Naive thymus-derived CD4-positive, alpha-beta T cell (primary cell): ENCODE measurements at regions of chr6 and their contacts with region 1.

Region 1: DNA sequence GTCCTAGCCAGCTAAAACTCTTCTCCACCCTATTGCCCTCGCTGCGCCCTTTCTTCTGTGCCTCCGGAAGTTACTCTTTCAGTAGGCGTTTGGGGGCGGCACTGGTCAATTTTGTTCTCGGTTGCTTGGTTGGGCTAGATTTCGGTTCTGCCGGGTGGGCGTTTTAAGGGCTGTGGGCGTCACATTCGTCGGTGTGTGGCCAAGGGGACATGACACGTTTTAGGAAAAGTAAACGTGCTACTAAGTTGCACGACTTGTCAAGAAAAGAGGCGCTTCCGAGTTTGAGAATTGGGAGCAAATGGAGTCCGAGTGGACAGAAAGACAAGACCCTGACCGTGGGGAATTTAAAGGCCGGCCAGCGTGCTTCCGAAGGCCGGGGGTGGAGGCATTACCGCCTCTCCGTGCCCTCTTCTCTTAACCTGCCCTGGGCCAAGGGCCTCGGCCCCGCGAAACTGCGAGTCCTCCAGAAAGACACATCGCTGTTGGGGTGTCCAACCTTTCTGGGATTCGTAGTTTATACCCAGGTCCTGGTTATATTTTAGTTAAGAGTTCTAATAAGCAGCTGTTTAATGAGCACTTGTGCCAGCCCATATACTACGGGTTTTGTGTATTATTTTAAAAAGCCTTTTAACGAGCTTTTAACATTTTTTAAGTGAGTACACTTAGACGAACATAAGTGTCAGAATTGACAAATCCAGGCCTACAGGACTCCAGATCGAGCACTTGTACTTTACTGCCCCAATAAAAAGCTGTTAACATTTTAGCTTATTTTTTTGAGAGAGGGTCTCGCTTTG is 661 bp upstream of the BAG6 start:
- DNase-seq: peak in 2 of 9 donors; percentile 81 to 89
- ATAC-seq: peak; percentile 77
- H3K4me3 ChIP-seq: peak overlapping the region; percentile 66
- H3K4me3 Mint-ChIP-seq: peak overlapping the region; percentile 96 to 100 (median 99)
- H3K27ac ChIP-seq: peak overlapping the region; percentile 95
- H3K27ac Mint-ChIP-seq: peak overlapping the region; percentile 99 to 100 (median 100)
- H3K4me1 ChIP-seq: peaks cover 23 to 30% of the 10 kb centered on the region in 2 donors
- H3K4me1 Mint-ChIP-seq: peaks cover 39 to 71% (median 63%) of the 10 kb centered on the region in 7 donors
- H3K27me3 ChIP-seq: no peaks in the 10 kb centered on the region
- H3K27me3 Mint-ChIP-seq: no peaks in the 10 kb centered on the region

Region 2: GRCh38 chr6:30963641-30964040 is 689.5 kb before region 1 on chr6:
- CTCF ChIA-PET with region 1: no interaction called
- POLR2A ChIA-PET with region 1: no interaction called
- intact Hi-C with region 1: no loop called
- DNase-seq: no peak
- ATAC-seq: no peak
- H3K4me3 ChIP-seq: no peak overlapping the region
- H3K4me3 Mint-ChIP-seq: no peak overlapping the region
- H3K27ac ChIP-seq: no peak overlapping the region
- H3K27ac Mint-ChIP-seq: no peak overlapping the region
- H3K4me1 ChIP-seq: no peaks in the 10 kb centered on the region
- H3K4me1 Mint-ChIP-seq: peaks cover 0 to 15% (median 6%) of the 10 kb centered on the region in 7 donors
- H3K27me3 ChIP-seq: no peaks in the 10 kb centered on the region
- H3K27me3 Mint-ChIP-seq: peaks cover 10 to 44% (median 28%) of the 10 kb centered on the region in 5 donors

Region 3: GRCh38 chr6:31430449-31430848 is 222.7 kb before region 1 on chr6:
- CTCF ChIA-PET with region 1: no interaction called
- POLR2A ChIA-PET with region 1: no interaction called
- intact Hi-C with region 1: no loop called
- DNase-seq: peak in 1 of 9 donors; percentile 12
- ATAC-seq: no peak
- H3K4me3 ChIP-seq: no peak overlapping the region
- H3K4me3 Mint-ChIP-seq: no peak overlapping the region
- H3K27ac ChIP-seq: no peak overlapping the region
- H3K27ac Mint-ChIP-seq: no peak overlapping the region
- H3K4me1 ChIP-seq: no peaks in the 10 kb centered on the region
- H3K4me1 Mint-ChIP-seq: no peaks in the 10 kb centered on the region
- H3K27me3 ChIP-seq: no peaks in the 10 kb centered on the region
- H3K27me3 Mint-ChIP-seq: peaks cover 0 to 30% (median 0%) of the 10 kb centered on the region in 5 donors

Region 4: DNA sequence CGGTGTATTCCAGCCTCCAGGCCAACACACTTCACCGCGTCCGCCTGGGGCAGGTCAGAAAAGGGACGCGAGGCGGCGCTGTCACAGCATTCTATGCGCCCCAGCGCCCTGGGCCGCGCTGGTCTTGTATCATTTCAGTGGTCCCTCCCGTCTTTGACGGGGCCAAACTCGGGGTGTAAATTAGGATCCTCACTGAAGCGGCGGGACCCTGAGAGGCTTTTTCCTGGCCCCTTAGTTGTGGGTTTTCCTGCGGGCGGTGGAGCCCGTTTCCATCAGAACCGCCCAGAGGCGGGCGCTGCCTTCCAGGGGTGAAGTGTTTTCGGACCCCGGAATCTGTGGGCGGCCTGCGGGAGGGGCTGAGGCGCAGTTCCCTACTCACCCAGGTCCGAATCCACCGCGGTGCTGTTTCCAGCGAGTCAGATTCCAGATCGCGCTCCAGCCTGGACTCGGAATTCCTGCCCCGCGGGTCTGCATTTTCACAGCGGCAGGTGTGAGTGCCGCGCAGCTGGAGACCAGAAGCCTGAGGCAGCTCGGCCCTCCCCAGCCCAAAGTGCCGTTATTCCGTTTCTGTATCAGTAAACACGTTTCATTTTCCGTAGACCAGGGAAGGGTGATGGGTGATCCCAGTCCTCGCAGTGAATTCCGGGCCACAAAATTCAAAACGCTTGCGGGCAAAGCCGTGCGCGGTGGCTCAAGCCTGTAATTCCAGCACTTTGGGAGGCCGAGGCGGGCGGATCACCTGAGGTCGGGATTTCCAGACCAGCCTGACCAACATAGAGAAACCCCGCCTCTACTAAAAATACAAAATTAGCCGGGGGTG is 159.0 kb before region 1 on chr6:
- CTCF ChIA-PET with region 1: no interaction called
- POLR2A ChIA-PET with region 1: no interaction called
- intact Hi-C with region 1: loop called (anchors 1 to 2 kb)
- DNase-seq: peak; percentile 33 to 78 (median 62)
- ATAC-seq: peak; percentile 65
- H3K4me3 ChIP-seq: peak overlapping the region; percentile 87
- H3K4me3 Mint-ChIP-seq: peak overlapping the region; percentile 78 to 93 (median 88)
- H3K27ac ChIP-seq: peak overlapping the region; percentile 81
- H3K27ac Mint-ChIP-seq: peak overlapping the region; percentile 36 to 98 (median 87)
- H3K4me1 ChIP-seq: peaks cover 17 to 24% of the 10 kb centered on the region in 2 donors
- H3K4me1 Mint-ChIP-seq: peaks cover 41 to 61% (median 50%) of the 10 kb centered on the region in 7 donors
- H3K27me3 ChIP-seq: no peaks in the 10 kb centered on the region
- H3K27me3 Mint-ChIP-seq: no peaks in the 10 kb centered on the region

Region 5: DNA sequence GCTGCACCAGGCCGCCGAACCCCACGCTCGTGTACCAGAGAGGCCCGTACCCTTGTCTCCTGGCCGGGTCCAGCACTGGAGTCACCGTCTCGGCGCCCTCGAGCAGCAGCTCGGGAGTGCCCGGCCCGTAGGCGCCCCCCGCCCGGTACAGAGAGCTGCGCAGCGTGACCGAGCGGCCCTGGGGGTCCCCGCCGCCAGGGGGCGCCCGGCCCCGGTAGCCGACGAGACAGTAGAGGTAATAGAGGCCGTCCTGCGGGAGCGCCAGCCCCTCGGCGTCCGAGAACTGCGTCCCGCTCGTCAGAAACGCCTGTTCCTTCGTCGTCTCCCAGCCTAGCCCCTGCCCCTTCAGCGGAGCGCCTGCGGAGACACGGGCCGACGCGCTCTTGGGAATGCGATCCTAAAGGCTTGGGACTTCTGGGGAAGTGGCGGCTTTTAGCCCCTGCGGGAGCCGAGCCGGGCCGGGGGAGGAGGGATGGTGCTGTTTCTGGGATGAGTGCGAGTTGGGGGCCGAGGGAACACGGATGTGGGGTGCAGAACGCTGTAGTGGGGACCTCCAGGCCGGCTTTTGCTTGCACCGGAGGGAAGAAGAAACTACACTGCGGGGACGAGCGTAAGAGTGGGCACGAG is 72.2 kb before region 1 on chr6:
- CTCF ChIA-PET with region 1: no interaction called
- POLR2A ChIA-PET with region 1: interaction called, 14 read pairs
- intact Hi-C with region 1: no loop called
- DNase-seq: peak; percentile 79 to 96 (median 88)
- ATAC-seq: peak; percentile 87
- H3K4me3 ChIP-seq: peak overlapping the region; percentile 97
- H3K4me3 Mint-ChIP-seq: peak overlapping the region; percentile 88 to 100 (median 99)
- H3K27ac ChIP-seq: peak overlapping the region; percentile 97
- H3K27ac Mint-ChIP-seq: peak overlapping the region; percentile 94 to 100 (median 97)
- H3K4me1 ChIP-seq: peaks cover 54 to 60% of the 10 kb centered on the region in 2 donors
- H3K4me1 Mint-ChIP-seq: peaks cover 47 to 80% (median 63%) of the 10 kb centered on the region in 7 donors
- H3K27me3 ChIP-seq: no peaks in the 10 kb centered on the region
- H3K27me3 Mint-ChIP-seq: no peaks in the 10 kb centered on the region

Region 6: DNA sequence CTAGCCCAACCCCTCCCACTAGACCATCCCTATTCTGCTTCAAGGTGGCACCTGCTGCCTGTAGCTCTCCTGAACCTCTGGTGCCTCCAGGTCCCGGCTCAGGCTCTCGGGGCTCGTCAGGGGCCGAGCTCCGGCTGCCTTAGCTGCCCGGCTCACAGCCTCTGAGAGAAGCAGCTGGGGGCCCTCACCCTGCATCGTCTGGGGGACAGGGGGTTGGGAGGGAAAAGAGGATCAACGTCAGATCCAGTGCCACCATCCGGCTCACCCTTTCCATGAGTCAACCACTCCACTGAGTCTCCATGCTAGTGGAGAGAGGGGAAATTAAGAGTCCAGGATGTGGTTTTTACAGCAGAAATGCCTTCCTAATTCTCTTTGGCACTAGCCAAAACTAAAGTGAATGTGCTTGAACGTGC is 13.7 kb before region 1 on chr6:
- CTCF ChIA-PET with region 1: interaction called, 4 read pairs
- POLR2A ChIA-PET with region 1: interaction called, 15 read pairs
- intact Hi-C with region 1: no loop called
- DNase-seq: no peak
- ATAC-seq: no peak
- H3K4me3 ChIP-seq: no peak overlapping the region
- H3K4me3 Mint-ChIP-seq: no peak overlapping the region
- H3K27ac ChIP-seq: no peak overlapping the region
- H3K27ac Mint-ChIP-seq: peak overlapping the region in 1 of 9 donors; percentile 49
- H3K4me1 ChIP-seq: no peaks in the 10 kb centered on the region
- H3K4me1 Mint-ChIP-seq: peaks cover 0 to 7% (median 0%) of the 10 kb centered on the region in 7 donors
- H3K27me3 ChIP-seq: no peaks in the 10 kb centered on the region
- H3K27me3 Mint-ChIP-seq: no peaks in the 10 kb centered on the region

Region 7: GRCh38 chr6:31702819-31703522 is 49.8 kb after region 1 on chr6 and contains the start of gene ABHD16A:
- CTCF ChIA-PET with region 1: interaction called, 4 read pairs
- POLR2A ChIA-PET with region 1: interaction called, 19 read pairs
- intact Hi-C with region 1: loop called (anchors 1 kb)
- DNase-seq: peak; percentile 93 to 97 (median 96)
- ATAC-seq: peak; percentile 95
- H3K4me3 ChIP-seq: peak within 1 kb of the TSS; percentile 98
- H3K4me3 Mint-ChIP-seq: peak within 1 kb of the TSS; percentile 92 to 100 (median 98)
- H3K27ac ChIP-seq: peak within 1 kb of the TSS; percentile 98
- H3K27ac Mint-ChIP-seq: peak within 1 kb of the TSS; percentile 95 to 98 (median 97)
- H3K4me1 ChIP-seq: peaks cover 21 to 28% of the 10 kb centered on the region in 2 donors
- H3K4me1 Mint-ChIP-seq: peaks cover 16 to 39% (median 31%) of the 10 kb centered on the region in 7 donors
- H3K27me3 ChIP-seq: no peaks in the 10 kb centered on the region
- H3K27me3 Mint-ChIP-seq: peaks cover 0 to 2% (median 0%) of the 10 kb centered on the region in 5 donors
- total RNA-seq, gene ABHD16A: 60.1 to 71.7 (median 65.2) TPM

Region 8: DNA sequence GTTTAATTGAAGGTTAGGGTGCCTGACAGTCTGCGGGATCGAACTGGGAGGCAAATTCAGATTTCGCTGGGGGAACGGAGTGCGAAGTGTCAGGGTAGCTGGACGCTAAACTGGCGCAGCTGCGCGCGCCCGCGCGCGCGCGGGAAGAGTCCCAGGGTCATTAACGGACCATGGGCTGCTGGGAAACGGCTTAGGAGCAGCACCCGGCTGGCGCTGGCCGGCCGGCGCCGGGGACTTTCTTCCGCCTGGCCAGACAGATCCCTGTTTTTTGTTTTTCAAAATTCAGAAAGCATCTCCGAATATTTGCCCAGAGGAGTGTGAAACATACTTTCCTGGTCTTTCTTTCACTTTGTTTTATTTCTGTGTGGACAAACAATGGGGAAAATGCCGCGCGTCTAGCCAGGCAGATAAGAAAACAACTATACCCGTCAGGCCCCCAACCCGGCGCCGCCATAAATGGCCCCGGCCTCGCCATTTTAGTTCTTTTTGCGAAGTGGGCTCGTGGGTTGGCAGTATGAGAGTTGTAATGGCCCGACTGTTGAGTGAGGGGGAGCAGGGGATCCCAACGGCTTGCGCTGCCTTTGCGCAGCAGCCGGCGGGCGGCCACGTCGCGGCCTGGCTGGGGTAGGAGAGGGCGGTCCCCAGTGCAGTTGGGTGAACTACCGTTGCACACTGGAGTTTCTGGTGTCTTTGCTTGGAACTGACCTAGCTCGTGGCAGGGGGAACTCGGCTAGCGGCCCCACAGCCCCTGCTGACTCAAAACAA is 181.5 kb after region 1 on chr6:
- CTCF ChIA-PET with region 1: interaction called, 3 read pairs
- POLR2A ChIA-PET with region 1: interaction called, 6 read pairs
- intact Hi-C with region 1: loop called (anchors 1 to 2 kb)
- DNase-seq: peak; percentile 77 to 84 (median 82)
- ATAC-seq: peak; percentile 82
- H3K4me3 ChIP-seq: peak overlapping the region; percentile 73
- H3K4me3 Mint-ChIP-seq: peak overlapping the region; percentile 84 to 99 (median 99)
- H3K27ac ChIP-seq: peak overlapping the region; percentile 92
- H3K27ac Mint-ChIP-seq: peak overlapping the region; percentile 91 to 100 (median 99)
- H3K4me1 ChIP-seq: peaks cover 40 to 48% of the 10 kb centered on the region in 2 donors
- H3K4me1 Mint-ChIP-seq: peaks cover 31 to 64% (median 53%) of the 10 kb centered on the region in 7 donors
- H3K27me3 ChIP-seq: no peaks in the 10 kb centered on the region
- H3K27me3 Mint-ChIP-seq: no peaks in the 10 kb centered on the region

Region 9: DNA sequence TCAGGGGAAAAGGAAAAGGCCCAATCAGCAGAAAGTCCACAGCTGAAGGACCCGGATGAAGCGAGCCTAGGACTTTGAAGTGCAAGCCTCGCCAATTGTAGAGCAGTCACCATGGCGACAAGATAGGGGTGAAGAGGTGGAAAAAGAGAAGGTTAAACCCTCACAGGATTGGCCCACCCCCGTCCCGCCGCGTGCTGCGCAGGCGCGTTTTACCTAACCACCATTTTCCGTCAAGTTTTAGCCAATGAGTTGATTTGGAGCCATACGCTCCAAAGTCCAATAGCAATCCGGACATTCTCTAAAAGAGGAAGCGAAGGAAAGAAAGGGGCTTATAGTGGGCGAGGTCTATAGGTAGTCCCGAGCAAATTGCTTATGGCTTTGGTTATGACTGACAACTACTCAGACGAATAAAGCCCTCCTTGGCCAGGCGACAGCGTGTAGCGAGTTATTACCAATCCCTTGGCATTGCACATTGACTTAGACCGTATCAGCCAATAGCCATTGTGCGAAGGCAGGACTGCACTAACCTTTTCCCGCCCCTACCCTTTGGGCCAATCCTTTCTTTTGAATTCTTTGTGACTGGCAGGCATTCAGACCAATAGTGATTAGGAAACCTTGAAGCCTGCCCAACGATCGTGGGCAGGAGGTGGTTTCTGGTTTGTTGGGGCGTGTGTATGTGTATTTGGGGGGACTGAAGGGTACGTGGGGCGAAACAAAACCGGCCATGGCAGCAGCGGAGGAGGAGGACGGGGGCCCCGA is 524.8 kb after region 1 on chr6 and contains the start of gene RNF5:
- CTCF ChIA-PET with region 1: no interaction called
- POLR2A ChIA-PET with region 1: no interaction called
- intact Hi-C with region 1: loop called in 1 of 2 experiments (anchors 5 kb)
- DNase-seq: peak; percentile 60 to 99 (median 97)
- ATAC-seq: peak; percentile 89
- H3K4me3 ChIP-seq: peak within 1 kb of the TSS; percentile 82
- H3K4me3 Mint-ChIP-seq: peak within 1 kb of the TSS; percentile 85 to 98 (median 95)
- H3K27ac ChIP-seq: peak within 1 kb of the TSS; percentile 91
- H3K27ac Mint-ChIP-seq: peak within 1 kb of the TSS; percentile 87 to 100 (median 95)
- H3K4me1 ChIP-seq: peaks cover 31 to 63% of the 10 kb centered on the region in 2 donors
- H3K4me1 Mint-ChIP-seq: peaks cover 63 to 86% (median 69%) of the 10 kb centered on the region in 7 donors
- H3K27me3 ChIP-seq: no peaks in the 10 kb centered on the region
- H3K27me3 Mint-ChIP-seq: no peaks in the 10 kb centered on the region
- total RNA-seq, gene RNF5: 17.0 to 50.6 (median 40.9) TPM